ENCODE measurements at regions of chr12 and their contacts with region 1.

Region 1: DNA sequence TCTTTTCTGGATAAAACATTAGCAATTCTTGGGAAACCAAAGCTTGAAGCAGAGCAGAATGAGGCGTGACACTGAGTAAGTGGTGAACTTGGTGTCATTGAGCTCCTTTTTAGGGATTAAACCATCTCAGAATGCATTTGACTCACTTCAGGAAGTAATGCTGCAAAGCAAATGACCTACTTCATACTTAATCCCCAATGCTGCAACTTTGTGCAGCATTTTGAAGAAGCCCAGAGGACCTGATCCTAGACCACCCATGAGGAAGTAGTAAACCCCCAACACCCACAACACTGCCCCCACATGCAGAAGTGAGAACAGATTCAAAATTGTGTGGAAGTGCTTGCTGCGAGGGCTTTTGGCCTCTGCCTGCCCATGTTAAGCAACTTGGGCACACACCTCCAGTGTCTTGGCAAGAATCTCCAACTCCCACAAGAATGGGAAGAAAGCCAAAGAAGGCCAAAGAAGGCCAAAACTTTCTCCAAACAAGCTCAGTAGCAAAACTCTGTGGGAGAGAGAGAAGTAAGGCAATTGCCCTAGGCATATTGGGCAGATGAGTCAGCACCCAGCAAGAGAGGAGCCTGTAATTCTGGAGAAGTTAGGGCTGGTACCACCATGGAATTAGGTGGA is 69.2 kb upstream of the ETV6 start:
- DNase-seq: peak in 8 of 42 donors; percentile 2 to 54 (median 17)

Region 2: GRCh38 chr12:12032851-12033588 is 452.8 kb after region 1 on chr12:
- intact Hi-C with region 1: loop called (anchors 1 kb)
- DNase-seq: peak; percentile 70 to 94 (median 86)